PC-3 (cell line): ENCODE measurements at regions of chr18 and their contacts with region 1.

Region 1: GRCh38 chr18:76259096-76259495 is 235.9 kb downstream of the ZNF516 start:
- DNase-seq: no peak
- ATAC-seq: no peak
- H3K4me3 ChIP-seq: no peak overlapping the region
- H3K27ac ChIP-seq: no peak overlapping the region
- H3K4me1 ChIP-seq: no peaks in the 10 kb centered on the region
- H3K27me3 ChIP-seq: peaks cover 76% of the 10 kb centered on the region
- CTCF ChIP-seq: no peak

Region 2: DNA sequence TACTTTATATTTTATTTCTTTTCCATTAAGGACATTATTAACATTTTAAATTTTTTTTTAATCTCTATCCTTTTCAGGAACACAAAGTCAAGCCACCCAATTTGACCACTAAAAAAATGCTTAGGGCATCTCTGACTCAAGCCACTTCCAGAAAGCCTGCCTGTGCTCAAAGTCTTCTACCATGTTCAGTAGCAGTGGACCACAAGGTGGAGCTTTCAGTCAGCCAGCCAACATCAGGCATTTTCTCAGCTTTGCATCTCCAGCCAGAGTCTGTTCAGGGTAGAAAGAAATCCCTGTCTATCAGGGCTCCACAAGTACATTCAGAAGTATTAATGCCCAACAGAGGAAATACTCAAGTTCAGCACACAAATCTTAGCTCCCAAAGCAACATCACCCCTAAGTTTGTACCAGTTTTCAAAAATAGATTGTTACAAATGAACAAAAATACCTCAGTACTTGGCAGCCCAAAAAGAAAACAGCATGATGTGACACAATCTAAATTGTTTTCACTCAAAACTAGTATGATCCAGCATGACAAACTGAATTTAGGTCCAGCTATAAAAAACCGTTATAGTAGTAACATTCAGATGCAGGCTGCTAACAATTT is 1905.8 kb before region 1 on chr18:
- CTCF ChIA-PET with region 1: no interaction called
- POLR2A ChIA-PET with region 1: no interaction called
- intact Hi-C with region 1: loop called (anchors 5 kb)
- DNase-seq: peak; percentile 73
- ATAC-seq: peak; percentile 93
- H3K4me3 ChIP-seq: no peak overlapping the region
- H3K27ac ChIP-seq: no peak overlapping the region
- H3K4me1 ChIP-seq: peaks cover 10% of the 10 kb centered on the region
- H3K27me3 ChIP-seq: peaks cover 38% of the 10 kb centered on the region
- CTCF ChIP-seq: peak; percentile 79

Region 3: DNA sequence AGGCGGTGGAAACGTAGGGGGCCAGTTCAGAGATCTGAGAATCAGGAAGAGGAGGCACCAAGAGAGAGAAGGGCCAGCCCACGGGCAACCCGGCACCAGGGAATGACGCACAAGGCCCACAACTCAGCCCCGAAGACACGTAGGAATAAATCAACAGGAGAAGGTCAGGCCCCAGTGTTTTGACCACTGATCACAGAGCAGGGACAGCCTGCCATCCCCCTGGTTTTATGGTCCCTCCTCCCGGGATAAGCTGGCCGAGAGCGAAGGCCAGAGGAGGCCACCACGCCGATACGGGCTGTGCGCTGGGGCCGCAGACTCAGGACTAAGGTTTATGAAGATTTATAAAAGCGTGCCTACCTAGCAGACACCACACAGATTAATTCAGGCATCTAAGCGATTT is 105.4 kb before region 1 on chr18:
- CTCF ChIA-PET with region 1: no interaction called
- POLR2A ChIA-PET with region 1: interaction called, 12 read pairs
- intact Hi-C with region 1: no loop called
- DNase-seq: no peak
- ATAC-seq: no peak
- H3K4me3 ChIP-seq: no peak overlapping the region
- H3K27ac ChIP-seq: no peak overlapping the region
- H3K4me1 ChIP-seq: no peaks in the 10 kb centered on the region
- H3K27me3 ChIP-seq: peaks cover 51% of the 10 kb centered on the region
- CTCF ChIP-seq: no peak